Mammary epithelial cell (primary cell): ENCODE measurements at regions of chr1 and their contacts with region 1.

Region 1: DNA sequence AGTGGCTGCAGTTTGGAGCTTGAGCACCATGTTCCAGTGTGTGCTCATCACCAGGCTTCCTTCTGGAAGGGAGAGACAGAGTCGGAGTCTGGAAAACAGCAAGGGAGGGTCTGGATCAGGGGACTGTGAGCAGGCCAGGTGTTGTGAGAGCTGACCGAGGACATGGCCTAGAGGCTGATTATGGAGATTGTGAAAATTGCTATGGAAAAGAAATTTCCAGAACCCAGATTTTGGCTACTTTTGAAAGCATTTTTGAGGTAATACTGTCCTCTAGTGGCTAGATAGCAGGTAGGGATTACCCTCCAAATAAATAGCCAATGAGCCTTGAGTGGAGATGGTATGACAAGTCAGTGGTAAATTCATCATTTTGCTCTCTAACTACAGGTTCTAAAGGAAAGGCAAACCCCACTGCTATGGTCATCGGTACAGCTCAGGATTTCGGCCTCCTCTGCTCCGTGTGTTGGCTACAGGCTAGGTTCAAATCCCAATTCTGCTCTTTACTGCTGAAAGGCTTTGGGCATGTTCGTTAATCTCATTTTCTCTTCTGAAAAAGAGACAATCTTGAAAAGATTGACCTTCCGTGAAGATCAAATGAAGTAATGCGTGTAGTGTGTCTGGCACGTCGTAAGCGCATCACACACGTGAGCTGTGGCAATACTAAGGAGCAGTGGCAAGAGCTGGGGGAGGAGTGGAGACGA is 1.0 kb upstream of the HAO2 start:
- DNase-seq: peak; percentile 57
- H3K4me3 ChIP-seq: no peak overlapping the region
- H3K27ac ChIP-seq: no peak overlapping the region
- H3K4me1 ChIP-seq: peaks cover 12% of the 10 kb centered on the region
- H3K27me3 ChIP-seq: no peaks in the 10 kb centered on the region
- CTCF ChIP-seq: peak; percentile 97 to 99

Region 2: GRCh38 chr1:118077331-118078055 is 1290.1 kb before region 1 on chr1:
- CTCF ChIA-PET with region 1: no interaction called
- dilution Hi-C with region 1: no loop called
- in situ Hi-C with region 1: no loop called
- intact Hi-C with region 1: loop called (anchors 1 kb)
- DNase-seq: peak; percentile 28
- H3K4me3 ChIP-seq: no peak overlapping the region
- H3K27ac ChIP-seq: no peak overlapping the region
- H3K4me1 ChIP-seq: no peaks in the 10 kb centered on the region
- H3K27me3 ChIP-seq: peaks cover 2% of the 10 kb centered on the region
- CTCF ChIP-seq: peak; percentile 44 to 61

Region 3: DNA sequence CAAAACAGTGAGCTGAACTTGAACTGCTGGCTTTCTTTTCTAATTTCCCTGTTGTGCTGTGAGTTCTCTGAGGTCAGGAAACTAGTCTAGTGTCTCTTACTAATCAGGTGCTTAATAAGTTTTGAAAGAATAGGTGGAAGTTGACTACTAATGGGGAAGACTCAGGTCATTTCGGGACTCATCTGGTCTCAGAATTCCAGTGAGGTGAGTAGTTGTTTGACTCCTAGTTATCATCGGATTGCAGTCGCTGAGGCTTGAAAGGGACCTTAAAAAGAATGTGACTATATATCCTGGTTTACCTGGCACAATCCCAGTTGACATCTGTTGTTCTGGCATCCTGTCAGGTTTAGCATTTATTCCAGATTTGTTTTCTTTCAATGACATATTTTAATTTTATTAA is 1101.1 kb before region 1 on chr1:
- CTCF ChIA-PET with region 1: no interaction called
- dilution Hi-C with region 1: no loop called
- in situ Hi-C with region 1: no loop called
- intact Hi-C with region 1: no loop called
- DNase-seq: peak; percentile 0
- H3K4me3 ChIP-seq: no peak overlapping the region
- H3K27ac ChIP-seq: no peak overlapping the region
- H3K4me1 ChIP-seq: no peaks in the 10 kb centered on the region
- H3K27me3 ChIP-seq: no peaks in the 10 kb centered on the region
- CTCF ChIP-seq: no peak

Region 4: DNA sequence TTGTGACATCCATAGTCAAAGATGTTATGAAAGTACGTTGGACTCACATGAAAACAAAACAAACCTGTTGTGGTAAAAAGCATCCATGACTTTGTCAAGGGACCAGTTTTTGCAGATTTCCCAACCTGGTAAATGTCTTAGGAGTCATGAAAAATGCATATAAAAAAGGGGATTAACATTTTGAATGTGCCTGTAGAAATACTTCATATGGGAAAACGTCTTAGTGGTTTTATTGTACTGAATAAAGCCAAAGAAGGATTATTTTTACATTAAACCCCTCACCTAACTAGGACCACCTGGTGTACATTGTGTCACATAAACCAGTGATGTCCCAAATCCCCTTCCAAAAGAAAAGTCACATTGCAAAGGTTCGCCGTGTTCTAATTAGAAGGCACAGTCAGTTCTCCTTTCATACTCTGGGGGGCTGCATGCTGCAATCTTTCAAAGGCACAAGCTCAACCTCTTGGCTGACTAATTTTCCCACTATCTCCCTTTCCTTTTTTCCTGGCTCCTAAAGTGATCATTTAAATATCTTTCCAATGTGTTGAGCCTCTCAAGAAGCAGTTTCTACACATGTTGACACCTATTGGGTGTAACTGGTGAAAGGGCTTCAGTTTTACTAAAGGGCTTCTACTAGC is 1062.7 kb before region 1 on chr1:
- CTCF ChIA-PET with region 1: no interaction called
- dilution Hi-C with region 1: no loop called
- in situ Hi-C with region 1: no loop called
- intact Hi-C with region 1: loop called (anchors 5 kb)
- DNase-seq: no peak
- H3K4me3 ChIP-seq: no peak overlapping the region
- H3K27ac ChIP-seq: no peak overlapping the region
- H3K4me1 ChIP-seq: no peaks in the 10 kb centered on the region
- H3K27me3 ChIP-seq: no peaks in the 10 kb centered on the region
- CTCF ChIP-seq: peak; percentile 74

Region 5: DNA sequence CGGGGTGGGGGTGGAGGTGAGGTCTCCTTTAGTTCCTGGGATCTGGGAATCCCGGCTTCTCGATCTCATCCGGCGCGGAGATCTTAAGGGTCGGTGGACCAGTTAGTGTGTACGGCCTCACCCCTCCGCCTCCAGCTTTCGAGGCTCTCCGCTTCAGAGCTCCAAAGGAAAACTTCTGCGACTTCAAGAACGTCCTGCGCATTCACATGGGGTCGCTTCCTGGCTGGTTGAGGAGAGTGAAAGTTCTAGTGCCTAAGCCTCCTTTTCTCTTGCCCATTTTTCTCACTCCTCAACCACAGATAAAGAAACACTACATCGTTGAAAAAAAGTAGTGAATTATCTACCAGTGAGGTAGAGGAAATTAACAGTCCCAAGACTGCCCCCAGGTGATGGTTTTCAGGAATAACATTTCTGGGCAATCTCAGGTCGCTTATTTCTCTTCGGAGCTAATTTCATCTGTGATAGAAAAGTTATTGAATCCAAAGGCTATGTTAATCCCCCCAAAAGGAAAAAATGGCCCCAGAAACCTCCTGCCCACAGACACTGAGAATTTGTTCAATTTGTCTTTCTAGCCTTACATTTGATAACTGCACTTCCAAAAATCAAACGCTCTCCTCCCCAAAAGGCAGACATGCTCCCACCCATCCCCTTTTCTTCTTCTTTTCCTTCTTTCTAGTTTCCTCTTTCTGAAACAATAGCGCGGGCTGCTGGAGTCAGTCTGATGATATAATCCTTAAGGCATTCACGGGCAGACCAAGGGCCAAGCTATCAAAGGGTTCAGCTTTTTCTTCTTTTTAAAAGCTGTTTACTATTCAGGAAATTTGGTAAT is 358.9 kb before region 1 on chr1:
- CTCF ChIA-PET with region 1: no interaction called
- dilution Hi-C with region 1: no loop called
- in situ Hi-C with region 1: no loop called
- intact Hi-C with region 1: loop called (anchors 5 kb)
- DNase-seq: peak; percentile 32
- H3K4me3 ChIP-seq: no peak overlapping the region
- H3K27ac ChIP-seq: no peak overlapping the region
- H3K4me1 ChIP-seq: peaks cover 38% of the 10 kb centered on the region
- H3K27me3 ChIP-seq: peaks cover 12% of the 10 kb centered on the region
- CTCF ChIP-seq: peak; percentile 47 to 55

Region 6: GRCh38 chr1:119140177-119141019 is 227.2 kb before region 1 on chr1 and contains the start of gene WARS2:
- CTCF ChIA-PET with region 1: no interaction called
- dilution Hi-C with region 1: no loop called
- in situ Hi-C with region 1: no loop called
- intact Hi-C with region 1: loop called (anchors 5 kb)
- DNase-seq: peak; percentile 96
- H3K4me3 ChIP-seq: peak within 1 kb of the TSS; percentile 52 to 73 (median 65)
- H3K27ac ChIP-seq: peak within 1 kb of the TSS; percentile 98
- H3K4me1 ChIP-seq: peaks cover 23% of the 10 kb centered on the region
- H3K27me3 ChIP-seq: no peaks in the 10 kb centered on the region
- CTCF ChIP-seq: no peak
- total RNA-seq, gene WARS2: 12.1 to 16.5 TPM

Region 7: DNA sequence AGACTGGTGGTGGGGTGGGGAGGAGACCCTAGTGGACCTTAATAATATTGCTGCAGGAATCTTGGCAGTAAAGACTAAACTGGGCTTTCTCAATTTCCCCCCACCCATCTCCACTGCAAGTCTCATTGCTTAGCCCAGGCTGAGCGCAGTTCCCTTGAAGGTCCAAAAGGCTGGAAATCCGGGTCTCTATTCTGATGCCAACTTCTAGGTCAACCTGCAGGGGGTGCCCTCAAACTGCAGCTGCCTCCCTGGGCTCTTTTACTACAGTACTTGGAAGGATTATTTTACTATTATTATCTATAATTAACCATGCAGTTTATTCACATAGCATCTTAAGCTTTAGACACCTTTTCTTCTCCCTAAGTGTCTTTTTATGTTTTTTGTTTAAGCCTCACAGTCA is 141.7 kb before region 1 on chr1:
- CTCF ChIA-PET with region 1: no interaction called
- dilution Hi-C with region 1: no loop called
- in situ Hi-C with region 1: no loop called
- intact Hi-C with region 1: loop called (anchors 1 kb)
- DNase-seq: no peak
- H3K4me3 ChIP-seq: no peak overlapping the region
- H3K27ac ChIP-seq: no peak overlapping the region
- H3K4me1 ChIP-seq: no peaks in the 10 kb centered on the region
- H3K27me3 ChIP-seq: no peaks in the 10 kb centered on the region
- CTCF ChIP-seq: peak; percentile 27 to 59

Region 8: DNA sequence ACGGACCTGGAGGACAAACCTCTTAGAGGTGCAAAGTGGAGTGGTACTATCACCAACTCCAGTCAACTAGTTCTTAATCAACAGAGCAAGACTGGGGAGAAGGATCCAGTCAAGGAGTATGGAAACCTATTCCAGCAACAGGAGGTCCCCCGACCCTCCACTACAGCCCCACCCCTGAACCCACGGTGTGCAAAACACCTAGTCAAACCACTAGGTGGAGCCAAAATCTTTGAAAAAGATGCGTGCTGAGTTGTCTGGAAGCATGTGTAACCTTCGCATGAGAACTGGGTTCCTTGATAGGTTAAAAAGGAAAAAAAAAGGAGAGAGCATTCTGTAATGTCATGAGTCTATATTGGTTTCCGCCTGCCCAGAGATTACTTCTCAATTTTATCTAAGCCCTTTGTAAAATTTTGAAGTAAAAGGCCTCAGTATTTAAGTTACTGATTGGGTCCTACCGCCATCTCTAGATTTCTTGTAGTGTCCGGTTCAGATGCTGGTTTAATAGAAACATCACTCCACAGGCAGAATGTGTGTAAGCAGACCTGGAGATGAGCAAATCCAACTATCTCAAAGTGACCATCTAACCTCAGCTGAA is 80.9 kb before region 1 on chr1:
- CTCF ChIA-PET with region 1: interaction called, 6 read pairs
- dilution Hi-C with region 1: no loop called
- in situ Hi-C with region 1: loop called (anchors 5 kb)
- intact Hi-C with region 1: loop called (anchors 1 kb)
- DNase-seq: peak; percentile 51
- H3K4me3 ChIP-seq: no peak overlapping the region
- H3K27ac ChIP-seq: no peak overlapping the region
- H3K4me1 ChIP-seq: peaks cover 17% of the 10 kb centered on the region
- H3K27me3 ChIP-seq: no peaks in the 10 kb centered on the region
- CTCF ChIP-seq: peak; percentile 49 to 74

Region 9: GRCh38 chr1:119387858-119388257 is 20.3 kb after region 1 on chr1:
- CTCF ChIA-PET with region 1: no interaction called
- dilution Hi-C with region 1: no loop called
- in situ Hi-C with region 1: no loop called
- intact Hi-C with region 1: no loop called
- DNase-seq: no peak
- H3K4me3 ChIP-seq: no peak overlapping the region
- H3K27ac ChIP-seq: no peak overlapping the region
- H3K4me1 ChIP-seq: no peaks in the 10 kb centered on the region
- H3K27me3 ChIP-seq: no peaks in the 10 kb centered on the region
- CTCF ChIP-seq: no peak